GM12878 (cell line): ENCODE measurements at regions of chr12 and their contacts with region 1.

Region 1: GRCh38 chr12:113912760-113913329 is 53.3 kb downstream of the RBM19 start:
- DNase-seq: no peak
- ATAC-seq: peak; percentile 89
- H3K4me3 ChIP-seq: no peak overlapping the region
- H3K27ac ChIP-seq: no peak overlapping the region
- H3K4me1 ChIP-seq: no peaks in the 10 kb centered on the region
- H3K27me3 ChIP-seq: no peaks in the 10 kb centered on the region
- CTCF ChIP-seq: peak; percentile 87 to 90 (median 88)
- EP300 ChIP-seq: no peak; a peak in 1 of 4 replicates
- POLR2A ChIP-seq: no peak
- RAD21 ChIP-seq: peak; percentile 85

Region 2: DNA sequence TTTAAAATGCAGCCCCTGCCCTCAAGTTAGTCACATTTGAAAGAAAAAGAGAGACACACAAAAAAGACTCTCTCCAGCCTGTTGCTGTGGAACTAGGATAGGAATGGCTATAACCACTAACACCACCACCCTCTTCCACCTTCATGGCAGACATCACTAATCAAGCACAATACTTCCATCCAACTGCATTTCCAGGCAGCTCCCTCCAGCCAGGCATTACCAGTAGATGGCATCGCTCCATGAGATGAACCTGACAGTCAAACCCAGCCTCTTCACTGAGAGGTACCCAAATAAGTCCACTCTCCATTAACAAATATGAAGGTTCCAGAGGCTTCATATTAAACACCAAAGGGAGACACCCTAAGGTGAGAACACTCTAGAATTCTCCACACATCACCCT is 602.4 kb before region 1 on chr12:
- CTCF ChIA-PET with region 1: no interaction called
- POLR2A ChIA-PET with region 1: no interaction called
- RAD21 ChIA-PET with region 1: no interaction called
- SMC1A ChIA-PET with region 1: no interaction called
- in situ Hi-C with region 1: no loop called
- intact Hi-C with region 1: loop called (anchors 10 kb)
- DNase-seq: no peak
- ATAC-seq: no peak
- H3K4me3 ChIP-seq: no peak overlapping the region
- H3K27ac ChIP-seq: no peak overlapping the region
- H3K4me1 ChIP-seq: no peaks in the 10 kb centered on the region
- H3K27me3 ChIP-seq: no peaks in the 10 kb centered on the region
- CTCF ChIP-seq: no peak
- EP300 ChIP-seq: no peak
- POLR2A ChIP-seq: no peak
- RAD21 ChIP-seq: no peak

Region 3: DNA sequence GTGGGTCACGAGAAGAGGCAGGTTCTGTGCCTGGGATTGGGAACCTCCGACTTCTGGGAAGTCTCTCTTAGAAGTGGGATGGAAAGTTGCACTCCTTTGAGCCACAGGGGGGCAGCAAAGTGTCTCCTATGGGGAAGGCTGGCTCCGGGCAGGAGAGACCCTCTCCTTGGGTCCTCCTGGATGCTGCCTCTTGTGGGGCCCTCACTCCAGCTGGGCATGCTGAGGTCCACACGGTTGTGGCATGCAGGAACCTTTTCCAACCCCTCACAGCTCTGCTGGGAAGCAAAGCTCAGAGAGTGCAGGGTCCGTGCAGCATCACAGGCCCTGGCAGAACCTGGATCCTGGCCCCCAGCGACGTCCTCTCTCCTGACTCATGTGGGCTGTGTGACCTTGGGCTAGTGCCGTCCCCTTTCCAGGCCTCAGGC is 473.2 kb before region 1 on chr12:
- CTCF ChIA-PET with region 1: no interaction called
- POLR2A ChIA-PET with region 1: no interaction called
- RAD21 ChIA-PET with region 1: no interaction called
- SMC1A ChIA-PET with region 1: no interaction called
- in situ Hi-C with region 1: loop called (anchors 10 kb)
- intact Hi-C with region 1: loop called (anchors 10 kb)
- DNase-seq: no peak
- ATAC-seq: peak; percentile 48; the same call in 2 of the 3 replicates
- H3K4me3 ChIP-seq: no peak overlapping the region
- H3K27ac ChIP-seq: no peak overlapping the region
- H3K4me1 ChIP-seq: no peaks in the 10 kb centered on the region
- H3K27me3 ChIP-seq: peaks cover 2 to 9% of the 10 kb centered on the region in 2 experiments; a peak in 3 of 4 replicates
- CTCF ChIP-seq: peak; percentile 50 to 71 (median 70)
- EP300 ChIP-seq: no peak
- POLR2A ChIP-seq: no peak
- RAD21 ChIP-seq: peak; percentile 51

Region 4: GRCh38 chr12:113462117-113462774 is 450.6 kb before region 1 on chr12:
- CTCF ChIA-PET with region 1: interaction called, 9 read pairs
- POLR2A ChIA-PET with region 1: no interaction called
- RAD21 ChIA-PET with region 1: interaction called, 4 read pairs
- SMC1A ChIA-PET with region 1: interaction called, 3 read pairs
- in situ Hi-C with region 1: loop called (anchors 5 kb)
- intact Hi-C with region 1: loop called (anchors 1 kb)
- DNase-seq: no peak
- ATAC-seq: peak; percentile 92
- H3K4me3 ChIP-seq: no peak overlapping the region
- H3K27ac ChIP-seq: no peak overlapping the region
- H3K4me1 ChIP-seq: no peaks in the 10 kb centered on the region
- H3K27me3 ChIP-seq: peaks cover 13 to 22% of the 10 kb centered on the region in 2 experiments; a peak in 3 of 4 replicates
- CTCF ChIP-seq: peak; percentile 75 to 93 (median 88)
- EP300 ChIP-seq: no peak
- POLR2A ChIP-seq: no peak
- RAD21 ChIP-seq: peak; percentile 51

Region 5: DNA sequence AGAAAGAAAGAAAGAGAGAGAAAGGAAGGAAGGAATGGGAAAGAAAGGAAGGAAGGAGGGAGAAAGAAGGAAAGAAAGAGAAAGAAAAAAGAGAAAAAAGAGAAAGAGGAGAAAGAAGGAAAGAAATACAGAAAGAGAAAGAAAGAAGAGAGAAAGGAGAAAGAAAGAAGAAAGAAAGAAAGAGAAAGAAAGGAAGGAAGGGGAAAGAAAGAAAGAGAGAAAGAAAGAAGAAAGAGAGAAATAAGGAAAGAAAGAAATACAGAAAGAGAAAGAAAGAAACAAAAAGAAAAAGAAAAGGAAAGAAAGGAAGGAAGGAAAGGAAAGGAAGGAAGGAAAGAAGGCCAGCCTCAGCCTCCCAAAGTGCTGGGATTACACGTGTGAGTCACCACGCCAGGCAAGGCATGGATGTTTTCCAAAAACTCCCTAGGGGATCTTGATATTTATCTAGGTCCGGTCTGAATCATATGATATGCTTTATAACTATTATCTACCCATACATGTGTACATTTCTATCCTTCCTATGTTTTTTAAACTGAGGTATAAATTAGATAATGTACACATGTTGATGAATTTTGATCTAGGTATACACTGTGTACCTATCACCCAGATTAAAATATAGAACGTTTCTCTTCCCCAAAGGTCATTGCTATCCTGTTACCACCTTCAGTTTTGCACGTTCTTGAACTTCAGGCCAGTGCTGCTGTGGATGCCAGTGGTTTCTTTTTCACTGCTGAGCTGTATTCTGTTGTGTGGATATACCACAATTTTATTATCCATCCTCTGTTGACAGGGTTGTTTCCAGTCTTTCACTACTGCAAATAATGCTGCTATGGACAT is 124.6 kb before region 1 on chr12:
- CTCF ChIA-PET with region 1: no interaction called
- POLR2A ChIA-PET with region 1: interaction called, 3 read pairs
- RAD21 ChIA-PET with region 1: no interaction called
- SMC1A ChIA-PET with region 1: no interaction called
- in situ Hi-C with region 1: no loop called
- intact Hi-C with region 1: loop called (anchors 5 kb)
- DNase-seq: no peak
- ATAC-seq: no peak
- H3K4me3 ChIP-seq: no peak overlapping the region
- H3K27ac ChIP-seq: no peak overlapping the region
- H3K4me1 ChIP-seq: no peaks in the 10 kb centered on the region
- H3K27me3 ChIP-seq: no peaks in the 10 kb centered on the region
- CTCF ChIP-seq: no peak
- EP300 ChIP-seq: no peak
- POLR2A ChIP-seq: no peak
- RAD21 ChIP-seq: no peak